ENCODE measurements at regions of chr2 and their contacts with region 1.

Region 1: DNA sequence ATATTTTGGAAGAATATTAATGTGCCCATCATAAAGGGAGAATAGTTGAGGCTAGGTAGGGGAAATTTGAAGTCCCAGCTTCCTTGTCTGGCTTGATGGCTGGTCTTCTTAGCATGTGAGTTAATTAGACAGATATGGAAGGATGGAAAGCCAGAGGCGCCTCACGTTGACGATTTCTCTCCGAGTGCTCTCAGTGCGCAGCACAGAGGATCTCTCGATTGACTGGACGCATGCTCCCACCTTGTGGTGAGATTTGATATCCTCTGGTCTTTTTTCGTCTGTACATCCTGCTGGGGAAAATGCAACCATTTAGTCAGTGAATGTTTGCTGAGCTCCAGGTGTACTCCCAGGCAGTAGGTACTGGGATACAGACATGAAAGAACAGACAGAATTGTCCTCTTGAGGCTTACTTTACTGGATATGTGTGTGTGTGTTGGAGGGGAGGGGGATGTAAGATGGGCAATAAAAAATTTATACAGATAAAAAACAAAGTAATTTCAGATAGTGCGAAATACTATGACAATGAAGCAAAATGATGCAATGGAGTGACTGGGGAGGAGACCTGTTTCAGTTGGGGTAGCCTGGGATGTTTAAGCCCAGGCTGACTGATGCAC is 66.9 kb upstream of the ZNG1B start:
- DNase-seq: peak; percentile 22 to 59 (median 52)
- H3K4me3 ChIP-seq: no peak overlapping the region
- H3K27ac ChIP-seq: no peak overlapping the region
- H3K4me1 ChIP-seq: no peaks in the 10 kb centered on the region
- H3K27me3 ChIP-seq: no peaks in the 10 kb centered on the region
- CTCF ChIP-seq: peak in 2 of 3 donors; percentile 44 to 60
- EP300 ChIP-seq: no peak
- POLR2A ChIP-seq: no peak

Region 2: GRCh38 chr2:113138428-113139322 is 231.9 kb before region 1 on chr2:
- intact Hi-C with region 1: loop called (anchors 10 kb)
- DNase-seq: peak in 1 of 5 donors; percentile 27
- H3K4me3 ChIP-seq: no peak overlapping the region
- H3K27ac ChIP-seq: no peak overlapping the region
- H3K4me1 ChIP-seq: no peaks in the 10 kb centered on the region
- H3K27me3 ChIP-seq: no peaks in the 10 kb centered on the region
- CTCF ChIP-seq: peak; percentile 17 to 57 (median 28)
- EP300 ChIP-seq: no peak
- POLR2A ChIP-seq: no peak

Region 3: GRCh38 chr2:113248997-113249770 is 121.4 kb before region 1 on chr2:
- intact Hi-C with region 1: loop called in 1 of 4 experiments (anchors 5 kb)
- DNase-seq: peak; percentile 34 to 67 (median 63)
- H3K4me3 ChIP-seq: no peak overlapping the region
- H3K27ac ChIP-seq: no peak overlapping the region
- H3K4me1 ChIP-seq: no peaks in the 10 kb centered on the region
- H3K27me3 ChIP-seq: no peaks in the 10 kb centered on the region
- CTCF ChIP-seq: peak; percentile 11 to 47 (median 38)
- EP300 ChIP-seq: no peak
- POLR2A ChIP-seq: no peak

Measured in ovary (tissue), 10 donors.